Posterior cingulate gyrus (tissue), 11 donors: ENCODE measurements at regions of chr2 and their contacts with region 1.

Region 1: GRCh38 chr2:28958689-28959088 is 22.4 kb upstream of the TOGARAM2 start:
- DNase-seq: peak; percentile 41 to 96 (median 72)

Region 2: GRCh38 chr2:28736034-28736433 is 222.7 kb before region 1 on chr2:
- intact Hi-C with region 1: no loop called
- DNase-seq: peak in 7 of 10 donors; percentile 19 to 86 (median 36)

Region 3: GRCh38 chr2:29196792-29197788 is 238.4 kb after region 1 on chr2:
- intact Hi-C with region 1: loop called (anchors 1 kb)
- DNase-seq: peak; percentile 39 to 95 (median 75)

Region 4: GRCh38 chr2:29829841-29830240 is 871.2 kb after region 1 on chr2:
- intact Hi-C with region 1: no loop called
- DNase-seq: peak in 5 of 10 donors; percentile 15 to 89 (median 29)

Region 5: DNA sequence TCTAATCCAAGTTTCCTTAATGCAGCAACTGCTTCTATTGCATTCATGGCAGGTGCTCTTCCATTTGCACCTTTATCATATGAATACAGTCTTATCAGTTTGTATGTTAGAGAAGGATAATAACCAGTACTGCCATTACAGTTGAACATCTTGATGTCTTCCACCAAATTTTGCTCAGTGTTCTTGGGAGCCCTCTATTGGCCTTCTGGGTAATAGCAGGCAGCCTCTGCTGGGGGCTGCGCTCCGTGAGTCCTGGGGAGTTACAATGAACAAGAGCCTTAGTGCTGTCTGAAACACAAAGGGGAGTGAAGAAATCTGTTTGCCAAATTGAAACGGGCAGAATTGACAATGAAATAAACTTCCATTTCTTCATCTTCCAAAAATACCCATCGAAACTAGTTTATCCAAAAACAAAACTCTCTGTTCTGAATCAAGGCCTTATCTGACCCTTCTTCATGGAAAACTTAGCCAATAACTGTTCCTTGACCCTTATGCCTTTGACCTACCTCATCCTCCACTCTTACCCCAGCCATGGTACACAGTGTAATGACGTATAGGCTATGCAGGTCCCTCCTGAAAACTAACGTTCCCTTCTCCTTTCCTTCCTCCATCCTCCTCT is 882.8 kb after region 1 on chr2:
- intact Hi-C with region 1: loop called (anchors 5 kb)
- DNase-seq: peak in 6 of 10 donors; percentile 38 to 82 (median 44)

Region 6: GRCh38 chr2:30072250-30072842 is 1113.7 kb after region 1 on chr2:
- intact Hi-C with region 1: loop called (anchors 5 kb)
- DNase-seq: peak; percentile 46 to 94 (median 75)